Activated B cell treated with CpG ODN at 0.5 μM for 24 hours (primary cell): ENCODE measurements at regions of chr6 and their contacts with region 1.

Region 1: GRCh38 chr6:11232193-11232769 is at the start of gene NEDD9:
- DNase-seq: peak; percentile 79
- ATAC-seq: peak; percentile 99
- H3K4me3 Mint-ChIP-seq: peak within 1 kb of the TSS; percentile 95
- H3K27ac Mint-ChIP-seq: peak within 1 kb of the TSS; percentile 94
- H3K4me1 Mint-ChIP-seq: peaks cover 51% of the 10 kb centered on the region
- H3K27me3 Mint-ChIP-seq: no peaks in the 10 kb centered on the region
- CTCF ChIP-seq: no peak
- total RNA-seq, gene NEDD9: 57.4 and 61.9 TPM in 2 replicates

Region 2: GRCh38 chr6:11251541-11252360 is 19.5 kb after region 1 on chr6:
- CTCF ChIA-PET with region 1: no interaction called
- POLR2A ChIA-PET with region 1: interaction called, 3 read pairs
- intact Hi-C with region 1: loop called (anchors 2 kb)
- DNase-seq: no peak
- ATAC-seq: no peak
- H3K4me3 Mint-ChIP-seq: no peak overlapping the region
- H3K27ac Mint-ChIP-seq: peak overlapping the region; percentile 15
- H3K4me1 Mint-ChIP-seq: peaks cover 8% of the 10 kb centered on the region
- H3K27me3 Mint-ChIP-seq: no peaks in the 10 kb centered on the region
- CTCF ChIP-seq: no peak

Region 3: DNA sequence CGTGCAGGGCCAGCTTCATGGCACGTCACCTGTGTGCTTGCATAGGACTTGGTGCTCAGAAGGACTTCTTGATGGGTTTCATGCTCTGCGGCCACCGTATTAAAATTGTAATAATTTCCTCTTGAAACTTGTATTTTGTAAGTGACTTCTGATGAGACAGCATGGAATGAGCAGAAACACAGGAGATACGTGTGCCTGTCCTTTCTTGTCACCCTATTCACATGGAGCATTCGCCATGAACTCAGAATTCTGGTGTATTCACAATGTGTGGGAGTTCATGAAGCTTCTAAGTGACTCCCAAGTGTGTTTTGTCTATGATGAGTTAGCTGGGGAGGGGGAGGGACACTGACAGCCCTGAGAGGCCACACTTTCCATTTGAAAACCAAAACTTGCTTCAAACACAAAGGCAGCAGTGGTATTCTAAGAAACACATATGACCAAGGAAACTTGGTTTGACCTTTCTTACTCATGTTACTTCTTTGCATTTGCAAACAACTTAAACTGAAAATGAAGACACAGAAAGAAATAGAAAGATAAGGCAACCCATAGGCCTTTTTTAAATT is 92.3 kb after region 1 on chr6:
- CTCF ChIA-PET with region 1: no interaction called
- POLR2A ChIA-PET with region 1: interaction called, 3 read pairs
- intact Hi-C with region 1: loop called (anchors 5 kb)
- DNase-seq: no peak
- ATAC-seq: peak; percentile 28
- H3K4me3 Mint-ChIP-seq: no peak overlapping the region
- H3K27ac Mint-ChIP-seq: peak overlapping the region; percentile 28
- H3K4me1 Mint-ChIP-seq: peaks cover 46% of the 10 kb centered on the region
- H3K27me3 Mint-ChIP-seq: no peaks in the 10 kb centered on the region
- CTCF ChIP-seq: no peak

Region 4: DNA sequence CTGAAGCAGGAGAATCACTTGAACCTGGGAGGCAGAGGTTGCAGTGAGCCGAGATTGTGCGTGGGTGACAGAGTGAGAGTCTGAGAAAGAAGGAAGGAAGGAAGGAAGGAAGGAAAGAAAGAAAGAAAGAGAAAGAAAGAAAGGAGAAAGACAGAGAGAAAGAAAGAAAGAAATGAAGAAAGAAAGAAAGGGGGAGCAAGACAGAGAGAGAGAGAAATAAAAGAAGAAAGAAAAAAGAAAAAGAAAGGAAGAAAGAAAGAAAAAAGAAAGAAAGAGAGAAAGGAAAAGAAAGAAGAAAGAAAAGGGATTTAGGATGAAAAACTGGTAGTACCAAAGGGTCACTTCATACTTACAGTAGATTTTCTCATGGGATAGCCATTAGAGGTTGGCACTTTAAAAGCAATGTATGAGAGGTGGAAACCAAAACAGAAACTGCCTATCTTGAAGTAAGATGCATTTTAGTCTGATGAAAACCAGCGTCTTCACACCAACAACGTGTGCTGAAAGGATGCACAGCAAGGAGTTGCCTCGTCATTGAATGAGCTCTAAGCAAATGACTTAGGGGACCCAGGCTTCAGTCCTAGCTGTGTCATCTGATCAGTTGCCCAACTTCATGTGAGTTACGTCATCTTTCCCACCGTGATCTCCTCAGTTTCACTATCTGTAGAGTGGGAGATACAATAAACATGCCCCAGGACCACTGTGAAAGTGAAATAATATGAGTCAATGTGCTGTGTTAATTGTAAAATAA is 134.1 kb after region 1 on chr6:
- CTCF ChIA-PET with region 1: no interaction called
- POLR2A ChIA-PET with region 1: no interaction called
- intact Hi-C with region 1: no loop called
- DNase-seq: no peak
- ATAC-seq: peak; percentile 53
- H3K4me3 Mint-ChIP-seq: peak overlapping the region; percentile 59
- H3K27ac Mint-ChIP-seq: peak overlapping the region; percentile 85
- H3K4me1 Mint-ChIP-seq: peaks cover 93% of the 10 kb centered on the region
- H3K27me3 Mint-ChIP-seq: no peaks in the 10 kb centered on the region
- CTCF ChIP-seq: no peak

Region 5: DNA sequence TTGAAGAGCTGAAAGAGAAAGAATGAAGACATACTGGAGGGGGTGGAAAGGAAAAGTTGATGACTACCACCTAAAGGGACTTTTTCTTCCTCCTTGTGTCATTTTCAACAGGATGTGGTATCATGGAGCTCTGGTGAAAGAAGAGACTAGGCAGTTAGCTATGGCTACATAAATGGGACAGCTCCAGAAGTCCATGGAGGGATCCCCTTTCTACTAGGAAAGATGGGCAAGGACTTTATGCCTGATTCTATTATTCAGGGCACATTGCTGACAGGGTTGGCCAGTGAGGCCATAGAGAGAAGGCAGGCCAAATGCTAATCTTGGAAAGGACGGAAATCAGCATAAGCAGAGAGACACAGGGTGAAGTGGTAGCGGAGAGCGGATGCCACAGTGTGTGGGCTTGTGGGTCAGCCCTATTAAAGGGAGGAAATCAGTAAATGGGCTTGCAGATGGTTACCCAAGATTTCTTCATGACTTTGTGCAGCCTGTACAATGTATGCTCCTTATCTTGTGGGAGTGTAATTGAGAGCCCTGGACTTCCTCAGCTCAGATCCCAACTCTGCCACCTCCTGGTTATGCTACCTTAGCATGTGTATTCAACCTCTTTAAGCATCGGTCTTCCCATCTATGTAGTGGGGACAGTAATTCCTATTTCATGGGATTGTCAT is 227.9 kb after region 1 on chr6:
- CTCF ChIA-PET with region 1: no interaction called
- POLR2A ChIA-PET with region 1: interaction called, 8 read pairs
- intact Hi-C with region 1: loop called (anchors 1 kb)
- DNase-seq: peak; percentile 22
- ATAC-seq: peak; percentile 18
- H3K4me3 Mint-ChIP-seq: peak overlapping the region; percentile 80
- H3K27ac Mint-ChIP-seq: peak overlapping the region; percentile 96
- H3K4me1 Mint-ChIP-seq: peaks cover 78% of the 10 kb centered on the region
- H3K27me3 Mint-ChIP-seq: no peaks in the 10 kb centered on the region
- CTCF ChIP-seq: no peak